OCI-LY7 (cell line): ENCODE measurements at regions of chr1 and their contacts with region 1.

Region 1: DNA sequence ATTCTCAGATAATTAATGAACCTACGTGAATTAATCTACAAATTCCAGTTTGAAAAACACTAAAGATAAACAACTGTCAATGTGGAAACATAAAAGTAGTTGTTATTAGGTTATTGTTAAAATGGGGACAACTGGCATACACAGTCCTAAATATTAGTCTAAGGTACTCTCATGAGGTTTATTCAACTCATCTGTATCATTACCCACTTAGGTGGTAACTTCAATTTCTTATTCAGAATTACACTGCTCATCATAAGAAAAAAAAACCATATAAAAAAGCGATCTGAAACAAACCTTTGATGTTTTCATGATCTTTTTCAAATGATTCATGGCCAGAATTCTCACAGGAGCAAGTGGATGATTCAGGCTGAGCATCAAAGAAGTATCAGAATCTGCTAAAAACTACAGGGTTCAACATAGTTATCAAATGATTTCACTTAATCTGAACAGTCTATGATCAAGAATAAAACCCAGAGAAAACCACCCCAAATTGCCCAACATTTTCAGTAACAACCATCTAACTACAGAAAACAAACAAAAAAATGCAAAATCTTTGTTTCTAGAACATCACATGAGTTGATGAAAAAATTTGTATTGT is 13.7 kb downstream of the HEATR1 start:
- DNase-seq: no peak
- H3K4me3 ChIP-seq: no peak overlapping the region
- H3K27ac ChIP-seq: no peak overlapping the region
- H3K4me1 ChIP-seq: no peaks in the 10 kb centered on the region
- CTCF ChIP-seq: no peak

Region 2: GRCh38 chr1:236516929-236517704 is 73.5 kb before region 1 on chr1:
- CTCF ChIA-PET with region 1: no interaction called
- POLR2A ChIA-PET with region 1: no interaction called
- intact Hi-C with region 1: no loop called
- DNase-seq: no peak
- H3K4me3 ChIP-seq: no peak overlapping the region
- H3K27ac ChIP-seq: no peak overlapping the region
- H3K4me1 ChIP-seq: no peaks in the 10 kb centered on the region
- CTCF ChIP-seq: no peak

Region 3: DNA sequence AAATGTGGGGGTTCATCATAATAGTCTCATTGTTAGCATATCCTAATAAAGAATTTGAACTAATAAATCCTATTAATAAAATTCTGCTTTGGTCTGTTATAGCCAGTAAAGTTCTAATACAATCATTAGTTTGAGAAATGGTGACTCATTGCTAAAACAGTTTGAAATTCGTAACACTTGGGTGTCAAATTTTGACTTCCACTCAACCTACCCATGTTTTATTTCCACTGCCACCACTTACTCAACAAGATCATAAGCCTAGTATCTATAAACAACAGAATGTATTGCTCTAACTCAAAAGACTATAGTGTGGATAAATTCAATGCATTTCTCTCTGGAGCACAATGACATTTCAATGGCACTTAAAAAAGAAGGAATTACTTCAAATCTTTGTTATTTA is 37.8 kb before region 1 on chr1:
- CTCF ChIA-PET with region 1: no interaction called
- POLR2A ChIA-PET with region 1: interaction called, 3 read pairs
- intact Hi-C with region 1: loop called (anchors 5 kb)
- DNase-seq: no peak
- H3K4me3 ChIP-seq: no peak overlapping the region
- H3K27ac ChIP-seq: no peak overlapping the region
- H3K4me1 ChIP-seq: no peaks in the 10 kb centered on the region
- CTCF ChIP-seq: no peak

Region 4: DNA sequence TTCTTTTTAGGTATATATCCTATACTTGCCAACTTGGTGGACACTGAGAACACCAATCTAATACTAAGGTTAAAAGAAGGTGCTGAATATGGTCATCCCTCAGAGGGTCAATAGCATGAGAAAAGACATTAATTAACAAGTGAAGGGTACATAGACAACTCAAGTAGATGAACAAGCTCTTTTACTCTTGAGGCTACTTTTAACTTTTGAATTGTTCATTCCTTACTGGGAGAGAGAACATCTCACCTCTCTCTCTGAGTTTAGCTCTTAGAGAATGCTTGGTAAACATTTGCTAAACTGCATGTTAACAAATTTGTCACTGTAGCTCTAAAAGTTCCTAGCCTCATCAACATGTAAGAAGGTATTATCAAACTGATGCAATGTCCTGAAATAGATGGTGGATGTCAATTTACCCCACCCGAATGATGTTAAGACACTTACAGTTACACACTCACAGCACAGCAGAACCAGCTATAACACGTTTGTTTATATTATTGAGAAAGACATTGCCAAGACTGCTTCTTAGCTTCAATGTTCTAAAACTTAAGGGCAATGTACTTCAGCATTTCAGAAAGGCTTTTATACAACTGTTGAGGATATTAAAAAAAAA is 22.3 kb before region 1 on chr1:
- CTCF ChIA-PET with region 1: no interaction called
- POLR2A ChIA-PET with region 1: no interaction called
- intact Hi-C with region 1: loop called (anchors 2 kb)
- DNase-seq: no peak
- H3K4me3 ChIP-seq: no peak overlapping the region
- H3K27ac ChIP-seq: no peak overlapping the region
- H3K4me1 ChIP-seq: no peaks in the 10 kb centered on the region
- CTCF ChIP-seq: no peak

Region 5: DNA sequence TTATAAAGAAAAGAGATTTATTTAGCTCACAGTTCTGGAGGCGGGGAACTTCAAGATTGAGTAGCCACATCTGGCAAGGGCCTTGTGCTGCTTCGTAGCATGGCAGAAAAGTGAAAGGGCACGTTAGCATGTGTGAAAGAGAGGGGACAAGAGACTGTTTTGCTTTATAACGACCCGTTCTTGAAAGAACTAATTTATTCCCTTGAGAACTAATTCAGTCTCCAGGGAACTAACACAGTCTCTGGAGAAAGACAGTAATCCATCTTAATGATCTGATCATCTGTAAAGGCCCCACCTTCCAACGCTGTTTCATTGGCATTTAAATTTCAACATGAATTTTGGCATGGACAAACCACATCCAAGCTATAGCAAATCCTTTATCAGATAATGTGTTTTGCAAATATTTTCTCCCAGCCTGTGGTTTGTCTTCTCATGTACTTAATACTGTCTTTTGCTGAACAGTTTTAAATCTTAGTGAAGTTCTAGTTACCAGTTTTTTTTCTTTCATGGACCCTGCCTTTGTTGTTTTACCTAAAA is 230.5 kb after region 1 on chr1:
- CTCF ChIA-PET with region 1: no interaction called
- POLR2A ChIA-PET with region 1: no interaction called
- intact Hi-C with region 1: loop called (anchors 10 kb)
- DNase-seq: no peak
- H3K4me3 ChIP-seq: no peak overlapping the region
- H3K27ac ChIP-seq: no peak overlapping the region
- H3K4me1 ChIP-seq: no peaks in the 10 kb centered on the region
- CTCF ChIP-seq: no peak